ENCODE measurements at regions of chr3 and their contacts with region 1.

Region 1: DNA sequence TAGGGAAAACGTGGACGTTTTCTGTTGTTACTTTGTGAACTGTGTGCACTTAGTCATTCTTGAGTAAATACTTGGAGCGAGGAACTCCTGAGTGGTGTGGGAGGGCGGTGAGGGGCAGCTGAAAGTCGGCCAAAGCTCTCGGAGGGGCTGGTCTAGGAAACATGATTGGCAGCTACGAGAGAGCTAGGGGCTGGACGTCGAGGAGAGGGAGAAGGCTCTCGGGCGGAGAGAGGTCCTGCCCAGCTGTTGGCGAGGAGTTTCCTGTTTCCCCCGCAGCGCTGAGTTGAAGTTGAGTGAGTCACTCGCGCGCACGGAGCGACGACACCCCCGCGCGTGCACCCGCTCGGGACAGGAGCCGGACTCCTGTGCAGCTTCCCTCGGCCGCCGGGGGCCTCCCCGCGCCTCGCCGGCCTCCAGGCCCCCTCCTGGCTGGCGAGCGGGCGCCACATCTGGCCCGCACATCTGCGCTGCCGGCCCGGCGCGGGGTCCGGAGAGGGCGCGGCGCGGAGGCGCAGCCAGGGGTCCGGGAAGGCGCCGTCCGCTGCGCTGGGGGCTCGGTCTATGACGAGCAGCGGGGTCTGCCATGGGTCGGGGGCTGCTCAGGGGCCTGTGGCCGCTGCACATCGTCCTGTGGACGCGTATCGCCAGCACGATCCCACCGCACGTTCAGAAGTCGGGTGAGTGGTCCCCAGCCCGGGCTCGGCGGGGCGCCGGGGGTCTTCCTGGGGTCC is at the start of gene TGFBR2:
- DNase-seq: peak; percentile 85 to 92
- H3K4me3 ChIP-seq: peak within 1 kb of the TSS; percentile 80
- H3K27ac ChIP-seq: peak within 1 kb of the TSS; percentile 67
- H3K4me1 ChIP-seq: peaks cover 24% of the 10 kb centered on the region
- H3K27me3 ChIP-seq: no peaks in the 10 kb centered on the region
- CTCF ChIP-seq: no peak
- total RNA-seq, gene TGFBR2: 26.4 and 33.6 TPM in 2 replicates

Region 2: GRCh38 chr3:30305021-30305420 is 301.4 kb before region 1 on chr3:
- CTCF ChIA-PET with region 1: no interaction called
- POLR2A ChIA-PET with region 1: no interaction called
- intact Hi-C with region 1: loop called (anchors 1 kb)
- DNase-seq: peak; percentile 43 to 58
- H3K4me3 ChIP-seq: no peak overlapping the region
- H3K27ac ChIP-seq: no peak overlapping the region
- H3K4me1 ChIP-seq: no peaks in the 10 kb centered on the region
- H3K27me3 ChIP-seq: no peaks in the 10 kb centered on the region
- CTCF ChIP-seq: no peak

Region 3: GRCh38 chr3:30342319-30343060 is 264.0 kb before region 1 on chr3:
- CTCF ChIA-PET with region 1: no interaction called
- POLR2A ChIA-PET with region 1: no interaction called
- intact Hi-C with region 1: loop called (anchors 5 kb)
- DNase-seq: peak; percentile 63 to 87
- H3K4me3 ChIP-seq: peak overlapping the region; percentile 29; the same call in 1 of the 2 replicates
- H3K27ac ChIP-seq: peak overlapping the region; percentile 77
- H3K4me1 ChIP-seq: peaks cover 28% of the 10 kb centered on the region
- H3K27me3 ChIP-seq: no peaks in the 10 kb centered on the region
- CTCF ChIP-seq: no peak

Measured in PC-9 (cell line).